ENCODE measurements at regions of chr20 and their contacts with region 1.

Region 1: GRCh38 chr20:32201296-32201976 is 6.1 kb downstream of the PLAGL2 start:
- DNase-seq: no peak
- ATAC-seq: no peak
- H3K4me3 ChIP-seq: no peak overlapping the region
- H3K27ac ChIP-seq: no peak overlapping the region
- H3K4me1 ChIP-seq: peaks cover 26% of the 10 kb centered on the region
- H3K27me3 ChIP-seq: no peaks in the 10 kb centered on the region
- CTCF ChIP-seq: no peak

Region 2: GRCh38 chr20:32063695-32064094 is 137.7 kb before region 1 on chr20:
- CTCF ChIA-PET with region 1: no interaction called
- POLR2A ChIA-PET with region 1: interaction called, 17 read pairs
- intact Hi-C with region 1: no loop called
- DNase-seq: no peak
- ATAC-seq: no peak
- H3K4me3 ChIP-seq: no peak overlapping the region
- H3K27ac ChIP-seq: no peak overlapping the region
- H3K4me1 ChIP-seq: no peaks in the 10 kb centered on the region
- H3K27me3 ChIP-seq: peaks cover 58% of the 10 kb centered on the region
- CTCF ChIP-seq: no peak

Measured in PC-3 (cell line).